ENCODE measurements at regions of chr22 and their contacts with region 1.

Region 1: DNA sequence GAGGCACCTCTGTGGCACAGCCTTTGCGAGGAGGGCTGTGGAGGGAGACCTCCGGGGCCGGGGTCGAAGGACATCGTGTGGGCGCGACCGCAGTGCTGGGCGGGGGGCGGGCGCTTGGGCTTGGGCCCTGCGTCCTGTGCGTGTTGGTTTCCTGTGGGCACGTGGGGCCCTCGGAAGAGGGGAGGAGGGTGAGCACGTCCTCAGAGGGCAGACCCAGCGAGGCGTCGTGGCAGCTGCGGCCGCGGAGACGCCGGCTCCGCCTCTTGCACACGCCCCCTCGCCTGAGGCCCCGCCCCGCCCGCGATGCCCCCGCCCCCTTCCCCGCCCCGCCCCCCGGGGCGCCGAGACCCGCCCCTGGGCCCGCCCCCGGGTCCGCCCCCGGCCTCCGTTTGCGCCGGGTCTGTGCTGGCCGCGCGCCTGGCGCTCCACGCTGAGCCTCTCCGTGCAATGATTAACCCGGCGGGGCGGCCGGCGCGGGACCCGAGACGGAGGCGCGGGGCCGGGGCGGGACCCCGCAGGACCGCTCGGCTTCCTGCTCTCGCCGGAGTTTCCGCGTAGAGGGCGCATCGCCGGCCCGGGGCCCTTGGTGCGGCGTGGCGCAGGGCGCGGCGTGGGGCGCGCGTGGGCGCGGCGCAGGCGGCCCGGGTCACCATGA is at the start of gene PRR5:
- DNase-seq: peak; percentile 51
- ATAC-seq: peak; percentile 83
- H3K4me3 ChIP-seq: peak within 1 kb of the TSS; percentile 59 to 84
- H3K27ac ChIP-seq: peak within 1 kb of the TSS; percentile 74
- H3K4me1 ChIP-seq: peaks cover 13 to 35% of the 10 kb centered on the region in 2 experiments
- H3K27me3 ChIP-seq: no peaks in the 10 kb centered on the region
- CTCF ChIP-seq: no peak
- POLR2A ChIP-seq: no peak
- RAD21 ChIP-seq: no peak
- total RNA-seq, gene PRR5: 26.9 TPM

Region 2: DNA sequence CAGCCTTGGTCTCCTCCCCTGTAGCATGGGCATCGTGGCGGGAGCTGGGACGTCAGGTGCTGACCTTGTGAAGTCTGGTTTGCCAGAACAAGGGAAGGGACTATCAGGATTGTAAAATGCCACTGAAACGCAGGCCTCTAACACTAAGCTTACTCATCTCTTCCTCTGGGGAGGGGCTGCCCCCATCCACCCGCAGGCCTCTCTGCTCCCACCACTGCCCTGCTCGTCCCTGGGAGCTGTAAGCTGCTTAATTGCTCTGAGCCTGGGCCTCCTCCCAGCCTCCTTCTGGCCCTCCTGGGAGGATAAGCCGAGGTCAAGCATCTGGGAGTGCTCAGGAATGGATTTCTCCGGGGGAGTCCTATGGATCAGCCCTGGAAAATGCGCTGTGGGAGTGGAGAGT is 397.6 kb before region 1 on chr22:
- CTCF ChIA-PET with region 1: no interaction called
- POLR2A ChIA-PET with region 1: no interaction called
- RAD21 ChIA-PET with region 1: no interaction called
- intact Hi-C with region 1: no loop called
- DNase-seq: no peak
- ATAC-seq: no peak
- H3K4me3 ChIP-seq: no peak overlapping the region
- H3K27ac ChIP-seq: no peak overlapping the region
- H3K4me1 ChIP-seq: peaks cover 0 to 5% of the 10 kb centered on the region in 2 experiments; a peak in 2 of 4 replicates
- H3K27me3 ChIP-seq: peaks cover 4% of the 10 kb centered on the region; the same call in 1 of the 2 replicates
- CTCF ChIP-seq: no peak
- POLR2A ChIP-seq: no peak
- RAD21 ChIP-seq: no peak

Region 3: GRCh38 chr22:44497218-44497904 is 204.6 kb before region 1 on chr22:
- CTCF ChIA-PET with region 1: no interaction called
- POLR2A ChIA-PET with region 1: no interaction called
- RAD21 ChIA-PET with region 1: no interaction called
- intact Hi-C with region 1: no loop called
- DNase-seq: no peak
- ATAC-seq: peak; percentile 23
- H3K4me3 ChIP-seq: peak overlapping the region; percentile 75 to 87
- H3K27ac ChIP-seq: peak overlapping the region; percentile 90
- H3K4me1 ChIP-seq: peaks cover 6 to 21% of the 10 kb centered on the region in 2 experiments
- H3K27me3 ChIP-seq: no peaks in the 10 kb centered on the region
- CTCF ChIP-seq: no peak
- POLR2A ChIP-seq: no peak
- RAD21 ChIP-seq: no peak

Region 4: DNA sequence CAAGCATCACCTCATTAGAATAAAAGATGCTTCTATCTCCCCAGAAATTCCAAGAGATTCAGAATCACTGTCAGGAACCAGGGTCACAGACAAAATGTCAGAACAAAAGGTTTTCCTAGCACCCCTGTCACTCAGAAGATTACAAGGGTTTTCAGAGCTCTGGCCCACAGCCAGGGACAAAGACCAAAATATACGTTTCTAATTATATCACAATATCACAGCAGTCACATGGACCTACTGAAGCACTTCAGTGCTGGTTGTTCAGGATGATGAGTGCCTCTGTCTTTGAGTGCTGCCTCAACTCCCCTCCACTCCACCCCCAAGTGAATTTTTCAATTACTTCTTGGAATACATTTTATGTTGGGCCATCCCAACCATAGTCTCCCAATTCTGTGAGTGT is 182.1 kb before region 1 on chr22:
- CTCF ChIA-PET with region 1: no interaction called
- POLR2A ChIA-PET with region 1: no interaction called
- RAD21 ChIA-PET with region 1: no interaction called
- intact Hi-C with region 1: no loop called
- DNase-seq: no peak
- ATAC-seq: no peak
- H3K4me3 ChIP-seq: no peak overlapping the region
- H3K27ac ChIP-seq: no peak overlapping the region
- H3K4me1 ChIP-seq: no peaks in the 10 kb centered on the region
- H3K27me3 ChIP-seq: peaks cover 7% of the 10 kb centered on the region; the same call in 1 of the 2 replicates
- CTCF ChIP-seq: no peak
- POLR2A ChIP-seq: no peak
- RAD21 ChIP-seq: no peak

Region 5: DNA sequence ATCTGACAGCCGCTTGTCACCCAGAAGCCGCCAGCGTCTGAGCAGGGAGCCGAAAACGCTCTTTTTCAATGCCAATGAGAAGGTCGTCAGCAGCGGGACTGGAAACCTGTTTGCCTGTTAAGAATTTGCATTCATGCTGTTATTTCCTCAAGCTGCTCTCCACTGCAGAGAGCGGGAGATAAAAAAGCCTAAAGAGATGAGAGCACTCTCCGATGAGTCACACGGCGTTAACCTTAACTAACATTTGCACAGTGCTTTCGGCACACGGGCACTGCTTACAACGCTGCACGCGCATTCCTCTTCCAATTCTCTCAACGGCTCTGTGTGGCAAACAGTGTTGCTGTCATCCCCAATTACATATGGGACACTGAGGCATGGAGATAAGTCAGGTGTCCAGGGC is 163.9 kb before region 1 on chr22:
- CTCF ChIA-PET with region 1: no interaction called
- POLR2A ChIA-PET with region 1: no interaction called
- RAD21 ChIA-PET with region 1: no interaction called
- intact Hi-C with region 1: no loop called
- DNase-seq: no peak
- ATAC-seq: peak; percentile 63
- H3K4me3 ChIP-seq: peak overlapping the region in 1 of 2 experiments; percentile 5; a peak in 1 of 4 replicates
- H3K27ac ChIP-seq: no peak overlapping the region
- H3K4me1 ChIP-seq: peaks cover 2 to 11% of the 10 kb centered on the region in 2 experiments; a peak in 2 of 4 replicates
- H3K27me3 ChIP-seq: peaks cover 29% of the 10 kb centered on the region; the same call in 1 of the 2 replicates
- CTCF ChIP-seq: no peak
- POLR2A ChIP-seq: no peak
- RAD21 ChIP-seq: no peak

Region 6: GRCh38 chr22:44684506-44685383 is 17.2 kb before region 1 on chr22:
- CTCF ChIA-PET with region 1: interaction called, 12 read pairs
- POLR2A ChIA-PET with region 1: no interaction called
- RAD21 ChIA-PET with region 1: no interaction called
- intact Hi-C with region 1: no loop called
- DNase-seq: peak; percentile 83
- ATAC-seq: peak; percentile 92
- H3K4me3 ChIP-seq: peak overlapping the region; percentile 22 to 31
- H3K27ac ChIP-seq: peak overlapping the region; percentile 3; the same call in 1 of the 2 replicates
- H3K4me1 ChIP-seq: peaks cover 27 to 32% of the 10 kb centered on the region in 2 experiments
- H3K27me3 ChIP-seq: no peaks in the 10 kb centered on the region
- CTCF ChIP-seq: peak; percentile 98 to 100 (median 99)
- POLR2A ChIP-seq: no peak
- RAD21 ChIP-seq: peak; percentile 58

Region 7: GRCh38 chr22:44735540-44736488 is 33.9 kb after region 1 on chr22:
- CTCF ChIA-PET with region 1: no interaction called
- POLR2A ChIA-PET with region 1: no interaction called
- RAD21 ChIA-PET with region 1: no interaction called
- intact Hi-C with region 1: loop called (anchors 1 kb)
- DNase-seq: no peak
- ATAC-seq: peak; percentile 72
- H3K4me3 ChIP-seq: no peak overlapping the region
- H3K27ac ChIP-seq: no peak overlapping the region
- H3K4me1 ChIP-seq: peaks cover 22 to 38% of the 10 kb centered on the region in 2 experiments
- H3K27me3 ChIP-seq: no peaks in the 10 kb centered on the region
- CTCF ChIP-seq: peak; percentile 67 to 95 (median 76)
- POLR2A ChIP-seq: no peak
- RAD21 ChIP-seq: peak; percentile 84

Region 8: GRCh38 chr22:44975427-44976262 is 273.7 kb after region 1 on chr22:
- CTCF ChIA-PET with region 1: no interaction called
- POLR2A ChIA-PET with region 1: no interaction called
- RAD21 ChIA-PET with region 1: no interaction called
- intact Hi-C with region 1: loop called (anchors 5 kb)
- DNase-seq: peak; percentile 71
- ATAC-seq: peak; percentile 99
- H3K4me3 ChIP-seq: no peak overlapping the region
- H3K27ac ChIP-seq: no peak overlapping the region
- H3K4me1 ChIP-seq: no peaks in the 10 kb centered on the region
- H3K27me3 ChIP-seq: peaks cover 49% of the 10 kb centered on the region
- CTCF ChIP-seq: peak; percentile 85 to 91 (median 86)
- POLR2A ChIP-seq: no peak
- RAD21 ChIP-seq: peak; percentile 89

Region 9: GRCh38 chr22:45082795-45083194 is 380.8 kb after region 1 on chr22:
- CTCF ChIA-PET with region 1: no interaction called
- POLR2A ChIA-PET with region 1: no interaction called
- RAD21 ChIA-PET with region 1: no interaction called
- intact Hi-C with region 1: loop called (anchors 5 kb)
- DNase-seq: no peak
- ATAC-seq: peak; percentile 61
- H3K4me3 ChIP-seq: no peak overlapping the region
- H3K27ac ChIP-seq: no peak overlapping the region
- H3K4me1 ChIP-seq: peaks cover 0 to 4% of the 10 kb centered on the region in 2 experiments; a peak in 1 of 4 replicates
- H3K27me3 ChIP-seq: no peaks in the 10 kb centered on the region; the same call in 1 of the 2 replicates
- CTCF ChIP-seq: peak; percentile 25 to 50 (median 33); a peak in 4 of 6 replicates
- POLR2A ChIP-seq: no peak
- RAD21 ChIP-seq: peak; percentile 62

Measured in HCT116 (cell line).